ENCODE measurements at regions of chr2 and their contacts with region 1.

Region 1: DNA sequence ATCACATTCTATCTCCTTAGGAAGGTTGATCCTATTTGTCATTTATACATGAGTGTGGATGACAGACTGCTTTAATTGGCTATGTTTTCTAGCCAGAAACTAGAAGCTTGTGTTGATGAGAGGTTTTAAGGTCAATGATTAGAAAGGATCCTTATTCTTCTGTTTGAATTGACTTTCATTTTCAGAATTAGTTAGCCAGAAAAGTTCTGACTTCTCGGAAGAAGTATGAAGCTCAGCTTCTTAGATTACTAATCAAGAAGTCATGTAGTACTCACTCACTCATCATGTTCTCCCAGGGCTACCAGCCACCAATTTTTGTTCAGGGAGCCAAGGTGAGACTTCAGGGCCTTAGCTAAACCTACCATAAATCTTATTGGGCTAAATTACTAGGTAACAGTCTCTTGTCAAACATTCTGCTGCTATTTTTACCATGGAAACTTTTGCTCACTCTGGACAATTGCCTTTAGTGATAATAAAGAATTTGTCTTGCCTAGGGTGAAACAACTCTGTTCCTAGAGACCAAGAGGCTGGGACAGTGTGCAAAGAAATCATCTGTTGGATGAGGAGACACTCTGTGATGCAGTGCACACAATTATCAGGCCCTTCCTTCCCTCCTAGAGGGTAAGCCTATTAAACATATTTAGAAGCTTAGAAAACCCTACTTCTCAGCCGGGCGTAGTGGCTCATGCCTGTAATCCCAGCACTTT is 111.6 kb upstream of the DNMT3A start:
- DNase-seq: peak; percentile 24
- H3K4me3 Mint-ChIP-seq: peak overlapping the region; percentile 51
- H3K27ac Mint-ChIP-seq: peak overlapping the region; percentile 90
- H3K4me1 Mint-ChIP-seq: peaks cover 42% of the 10 kb centered on the region
- H3K27me3 Mint-ChIP-seq: no peaks in the 10 kb centered on the region

Region 2: GRCh38 chr2:25276569-25277465 is 176.5 kb before region 1 on chr2:
- intact Hi-C with region 1: loop called (anchors 10 kb)
- DNase-seq: peak; percentile 73
- H3K4me3 Mint-ChIP-seq: peak overlapping the region; percentile 53
- H3K27ac Mint-ChIP-seq: peak overlapping the region; percentile 81
- H3K4me1 Mint-ChIP-seq: peaks cover 67% of the 10 kb centered on the region
- H3K27me3 Mint-ChIP-seq: no peaks in the 10 kb centered on the region

Region 3: GRCh38 chr2:25314514-25315315 is 138.6 kb before region 1 on chr2:
- intact Hi-C with region 1: loop called (anchors 1 kb)
- DNase-seq: peak; percentile 80
- H3K4me3 Mint-ChIP-seq: peak overlapping the region; percentile 83
- H3K27ac Mint-ChIP-seq: peak overlapping the region; percentile 97
- H3K4me1 Mint-ChIP-seq: peaks cover 56% of the 10 kb centered on the region
- H3K27me3 Mint-ChIP-seq: no peaks in the 10 kb centered on the region

Region 4: GRCh38 chr2:25362049-25362433 is 91.3 kb before region 1 on chr2:
- intact Hi-C with region 1: loop called (anchors 1 kb)
- DNase-seq: peak; percentile 93
- H3K4me3 Mint-ChIP-seq: peak overlapping the region; percentile 84
- H3K27ac Mint-ChIP-seq: peak overlapping the region; percentile 94
- H3K4me1 Mint-ChIP-seq: peaks cover 26% of the 10 kb centered on the region
- H3K27me3 Mint-ChIP-seq: peaks cover 2% of the 10 kb centered on the region

Region 5: DNA sequence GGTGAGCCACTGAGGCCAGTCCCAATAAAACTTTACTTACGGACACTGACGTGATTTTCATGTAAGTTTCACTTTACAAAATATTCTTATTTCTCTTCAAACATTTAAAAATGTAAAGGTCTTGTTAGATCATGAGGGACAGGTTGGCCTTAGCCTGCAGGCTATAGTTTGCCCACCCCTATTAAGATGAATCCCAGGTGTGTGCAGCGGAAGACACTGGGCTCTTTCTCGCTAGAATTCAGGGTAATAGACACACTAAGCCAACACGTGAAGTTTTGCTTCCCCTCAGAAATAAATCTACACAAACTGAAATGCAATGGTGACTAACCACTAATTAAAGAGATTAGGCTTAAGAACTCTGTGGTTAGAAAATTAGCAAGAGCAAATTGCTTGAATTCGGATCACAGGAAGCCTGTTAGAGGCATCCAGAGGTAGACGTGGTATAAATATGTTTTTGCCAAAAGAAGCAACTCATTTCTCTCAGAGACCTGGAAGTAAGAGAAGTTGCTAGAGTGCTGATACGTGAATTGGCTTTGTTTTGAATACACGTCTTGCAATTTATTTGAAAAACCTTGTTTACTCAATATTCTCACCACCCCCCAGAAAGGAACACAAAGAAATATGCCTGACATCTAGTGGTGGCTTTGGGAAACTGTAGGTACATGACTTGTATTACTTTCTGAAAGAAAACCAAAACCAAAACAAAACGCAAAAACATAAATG is 68.5 kb after region 1 on chr2:
- intact Hi-C with region 1: loop called (anchors 1 kb)
- DNase-seq: peak; percentile 56
- H3K4me3 Mint-ChIP-seq: peak overlapping the region; percentile 5
- H3K27ac Mint-ChIP-seq: peak overlapping the region; percentile 65
- H3K4me1 Mint-ChIP-seq: peaks cover 21% of the 10 kb centered on the region
- H3K27me3 Mint-ChIP-seq: no peaks in the 10 kb centered on the region

Region 6: DNA sequence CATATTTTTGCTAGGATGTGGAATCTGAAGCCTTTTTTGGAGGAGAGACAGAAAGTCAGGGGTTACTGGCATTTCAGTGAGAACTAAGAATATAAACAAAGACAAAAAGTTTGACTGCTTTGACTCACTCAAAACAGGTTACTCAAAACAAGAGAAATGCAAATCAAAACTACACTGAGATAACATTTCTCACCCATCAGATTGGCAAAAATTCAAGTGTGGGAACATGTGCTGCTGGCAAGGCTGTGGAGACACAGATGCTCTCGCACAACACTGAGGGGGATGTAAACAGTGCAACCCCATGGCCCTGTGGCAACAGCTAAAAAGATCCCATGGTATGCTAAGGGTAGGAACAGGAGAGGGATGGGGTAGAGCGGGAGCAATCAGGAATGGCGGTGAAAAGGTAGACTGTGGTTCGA is 133.4 kb after region 1 on chr2:
- intact Hi-C with region 1: loop called (anchors 1 kb)
- DNase-seq: no peak
- H3K4me3 Mint-ChIP-seq: peak overlapping the region; percentile 71
- H3K27ac Mint-ChIP-seq: peak overlapping the region; percentile 92
- H3K4me1 Mint-ChIP-seq: peaks cover 27% of the 10 kb centered on the region
- H3K27me3 Mint-ChIP-seq: no peaks in the 10 kb centered on the region

Region 7: GRCh38 chr2:25651071-25651470 is 197.7 kb after region 1 on chr2:
- intact Hi-C with region 1: no loop called
- DNase-seq: no peak
- H3K4me3 Mint-ChIP-seq: no peak overlapping the region
- H3K27ac Mint-ChIP-seq: no peak overlapping the region
- H3K4me1 Mint-ChIP-seq: no peaks in the 10 kb centered on the region
- H3K27me3 Mint-ChIP-seq: peaks cover 1% of the 10 kb centered on the region

Region 8: GRCh38 chr2:25787013-25787412 is 333.7 kb after region 1 on chr2:
- intact Hi-C with region 1: no loop called
- DNase-seq: no peak
- H3K4me3 Mint-ChIP-seq: no peak overlapping the region
- H3K27ac Mint-ChIP-seq: no peak overlapping the region
- H3K4me1 Mint-ChIP-seq: peaks cover 28% of the 10 kb centered on the region
- H3K27me3 Mint-ChIP-seq: no peaks in the 10 kb centered on the region